Endothelial cell of umbilical vein (primary cell): ENCODE measurements at regions of chr2 and their contacts with region 1.

Region 1: DNA sequence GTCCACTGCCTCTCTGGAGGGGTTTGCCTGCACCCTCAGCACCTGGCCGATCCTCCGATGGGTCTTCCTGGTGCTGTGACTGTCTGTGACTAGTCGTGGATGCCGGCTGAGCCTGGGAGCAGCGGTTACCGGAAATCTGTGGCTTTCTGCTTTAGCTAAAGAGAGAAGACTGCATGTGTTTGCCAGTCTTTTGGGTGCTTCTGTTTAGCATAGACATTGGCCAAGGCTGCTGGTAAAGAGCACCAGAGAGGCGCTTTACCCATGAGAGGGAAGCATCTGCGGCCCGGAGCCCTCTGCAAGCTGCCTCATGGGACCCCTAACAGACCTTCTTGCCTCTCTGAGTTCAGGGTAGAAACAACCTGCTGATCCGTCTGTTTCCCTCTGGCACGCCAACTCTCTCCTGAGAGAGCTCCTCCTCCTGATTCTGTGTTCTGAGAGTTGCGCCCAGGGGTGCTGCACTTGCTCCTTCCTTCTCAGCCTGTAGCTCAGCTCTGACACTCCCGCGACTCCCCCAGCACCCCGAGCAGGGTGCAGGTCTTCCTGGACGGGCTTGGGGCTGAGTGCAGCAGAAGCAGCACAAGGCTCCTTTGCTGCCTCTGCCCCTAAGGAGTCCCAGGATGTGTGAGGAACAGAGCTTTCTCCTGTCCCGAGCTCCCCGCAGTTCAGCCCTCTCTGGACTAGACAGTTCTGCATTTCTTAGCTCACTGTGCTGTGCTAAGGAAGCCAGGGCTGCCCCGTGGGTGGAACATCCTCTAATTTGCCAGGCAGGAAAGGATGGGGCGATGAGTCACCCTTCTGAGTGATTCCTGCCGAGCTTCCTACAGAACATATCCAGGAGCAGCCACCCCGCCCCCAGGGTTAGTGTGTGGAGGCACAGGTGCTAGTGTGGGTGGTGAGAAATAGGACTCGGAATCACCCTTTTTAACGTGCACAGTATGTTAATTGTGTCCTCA is 203.2 kb downstream of the SH3RF3 start:
- DNase-seq: peak; percentile 92
- H3K4me3 ChIP-seq: peak overlapping the region in 1 of 3 experiments; percentile 34
- H3K27ac ChIP-seq: peak overlapping the region; percentile 76
- H3K4me1 ChIP-seq: peaks cover 54% of the 10 kb centered on the region
- H3K27me3 ChIP-seq: no peaks in the 10 kb centered on the region
- CTCF ChIP-seq: no peak
- POLR2A ChIP-seq: peak; percentile 76

Region 2: GRCh38 chr2:109173311-109174171 is 158.6 kb before region 1 on chr2:
- CTCF ChIA-PET with region 1: no interaction called
- POLR2A ChIA-PET with region 1: no interaction called
- dilution Hi-C with region 1: no loop called
- intact Hi-C with region 1: loop called (anchors 2 kb)
- DNase-seq: peak; percentile 82
- H3K4me3 ChIP-seq: no peak overlapping the region
- H3K27ac ChIP-seq: peak overlapping the region; percentile 90
- H3K4me1 ChIP-seq: peaks cover 55% of the 10 kb centered on the region
- H3K27me3 ChIP-seq: no peaks in the 10 kb centered on the region
- CTCF ChIP-seq: no peak
- POLR2A ChIP-seq: peak; percentile 48

Region 3: DNA sequence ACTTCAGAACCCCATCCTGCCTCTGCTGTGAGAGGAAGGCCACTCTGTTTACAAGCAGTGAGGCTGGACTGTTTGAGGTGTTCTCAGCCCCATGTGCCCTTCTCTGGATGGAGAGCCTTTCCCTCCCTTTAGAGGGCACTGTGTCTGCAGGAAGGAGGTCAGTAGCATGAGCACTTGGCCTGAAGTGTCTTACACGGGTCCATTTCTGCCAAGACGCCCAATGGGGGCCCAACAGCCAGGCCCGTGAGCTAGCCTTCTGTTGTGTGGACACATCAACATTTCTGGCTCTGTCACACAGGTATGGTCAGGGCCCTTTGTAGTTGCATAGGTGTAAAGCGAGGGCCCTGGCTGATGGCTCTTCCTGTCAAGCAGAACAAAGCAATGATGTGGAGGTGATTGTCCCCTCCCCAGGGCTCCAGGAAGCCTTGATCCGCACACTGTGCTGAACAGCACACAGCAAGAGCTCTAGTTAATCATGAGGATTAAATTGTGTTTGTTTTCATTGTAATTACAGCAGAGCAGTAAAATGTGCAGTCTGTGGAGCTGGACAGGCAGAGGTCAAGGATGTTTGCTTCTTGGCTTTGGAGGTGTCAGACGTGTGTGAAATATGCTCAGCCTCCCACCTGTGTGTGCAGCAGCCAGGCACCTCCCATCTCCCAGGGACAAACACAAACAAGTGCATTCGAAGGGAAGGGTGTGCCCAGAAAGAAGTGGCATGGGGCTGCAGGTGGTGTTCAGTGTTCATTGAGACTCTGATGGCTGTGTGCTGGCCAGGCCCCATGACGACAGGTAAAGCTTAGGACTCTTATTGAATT is 71.1 kb before region 1 on chr2:
- CTCF ChIA-PET with region 1: interaction called, 3 read pairs
- POLR2A ChIA-PET with region 1: interaction called, 3 read pairs
- dilution Hi-C with region 1: no loop called
- intact Hi-C with region 1: loop called (anchors 5 kb)
- DNase-seq: no peak
- H3K4me3 ChIP-seq: no peak overlapping the region
- H3K27ac ChIP-seq: no peak overlapping the region
- H3K4me1 ChIP-seq: peaks cover 26% of the 10 kb centered on the region
- H3K27me3 ChIP-seq: no peaks in the 10 kb centered on the region
- CTCF ChIP-seq: peak; percentile 24 to 45
- POLR2A ChIP-seq: no peak

Region 4: DNA sequence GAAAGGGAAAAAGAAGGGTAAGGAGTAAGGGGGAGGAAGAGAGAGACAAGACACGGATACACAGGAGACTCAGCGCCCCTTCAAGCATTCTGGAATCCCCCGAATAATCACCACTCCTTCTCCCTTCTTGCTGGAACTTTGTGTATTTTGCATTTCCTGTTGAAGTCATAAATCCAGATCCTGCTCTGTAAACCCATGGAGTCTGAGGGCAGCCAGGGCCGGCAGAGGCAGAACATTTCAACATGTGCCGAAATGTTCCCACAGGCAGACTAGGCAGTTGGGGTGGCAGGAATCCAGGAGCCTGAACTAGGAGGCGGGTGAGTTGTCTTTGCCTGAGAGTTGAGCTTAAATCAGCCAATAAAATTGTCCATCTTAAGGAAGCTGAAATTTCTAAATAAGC is 10.1 kb before region 1 on chr2:
- CTCF ChIA-PET with region 1: interaction called, 22 read pairs
- POLR2A ChIA-PET with region 1: no interaction called
- dilution Hi-C with region 1: no loop called
- intact Hi-C with region 1: no loop called
- DNase-seq: peak; percentile 87
- H3K4me3 ChIP-seq: no peak overlapping the region
- H3K27ac ChIP-seq: peak overlapping the region; percentile 55
- H3K4me1 ChIP-seq: peaks cover 38% of the 10 kb centered on the region
- H3K27me3 ChIP-seq: no peaks in the 10 kb centered on the region
- CTCF ChIP-seq: no peak
- POLR2A ChIP-seq: no peak

Region 5: GRCh38 chr2:109351164-109351756 is 19.1 kb after region 1 on chr2:
- CTCF ChIA-PET with region 1: interaction called, 22 read pairs
- POLR2A ChIA-PET with region 1: interaction called, 3 read pairs
- dilution Hi-C with region 1: no loop called
- intact Hi-C with region 1: no loop called
- DNase-seq: peak; percentile 69
- H3K4me3 ChIP-seq: no peak overlapping the region
- H3K27ac ChIP-seq: no peak overlapping the region
- H3K4me1 ChIP-seq: peaks cover 38% of the 10 kb centered on the region
- H3K27me3 ChIP-seq: no peaks in the 10 kb centered on the region
- CTCF ChIP-seq: no peak
- POLR2A ChIP-seq: no peak

Region 6: DNA sequence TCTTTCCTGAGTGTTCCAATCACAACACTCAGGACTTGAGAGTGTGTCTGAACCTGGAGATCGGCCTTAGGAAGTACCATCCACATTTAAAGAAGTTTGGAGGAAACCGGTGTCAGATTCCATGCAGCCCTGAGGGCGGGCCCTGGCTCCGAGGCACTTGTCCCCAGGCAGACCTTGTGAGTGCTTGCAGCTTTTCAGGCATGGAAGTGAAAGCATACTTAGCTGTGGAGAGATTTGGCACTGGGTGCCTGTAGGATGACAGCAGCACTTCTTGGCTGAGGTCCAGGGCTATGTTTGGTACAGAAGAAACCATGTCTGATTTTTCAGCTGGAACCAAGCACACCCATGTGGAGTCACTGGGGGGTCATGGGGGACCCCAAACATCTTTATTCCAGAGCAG is 50.8 kb after region 1 on chr2:
- CTCF ChIA-PET with region 1: no interaction called
- POLR2A ChIA-PET with region 1: no interaction called
- dilution Hi-C with region 1: no loop called
- intact Hi-C with region 1: loop called (anchors 2 kb)
- DNase-seq: peak; percentile 52
- H3K4me3 ChIP-seq: no peak overlapping the region
- H3K27ac ChIP-seq: no peak overlapping the region
- H3K4me1 ChIP-seq: no peaks in the 10 kb centered on the region
- H3K27me3 ChIP-seq: no peaks in the 10 kb centered on the region
- CTCF ChIP-seq: no peak
- POLR2A ChIP-seq: no peak

Region 7: GRCh38 chr2:109497463-109497862 is 165.3 kb after region 1 on chr2:
- CTCF ChIA-PET with region 1: interaction called, 4 read pairs
- POLR2A ChIA-PET with region 1: no interaction called
- dilution Hi-C with region 1: no loop called
- intact Hi-C with region 1: loop called (anchors 5 kb)
- DNase-seq: peak; percentile 60
- H3K4me3 ChIP-seq: no peak overlapping the region
- H3K27ac ChIP-seq: peak overlapping the region; percentile 74
- H3K4me1 ChIP-seq: peaks cover 19% of the 10 kb centered on the region
- H3K27me3 ChIP-seq: no peaks in the 10 kb centered on the region
- CTCF ChIP-seq: no peak
- POLR2A ChIP-seq: no peak